HepG2 (cell line): ENCODE measurements at regions of chr18 and their contacts with region 1.

Region 1: DNA sequence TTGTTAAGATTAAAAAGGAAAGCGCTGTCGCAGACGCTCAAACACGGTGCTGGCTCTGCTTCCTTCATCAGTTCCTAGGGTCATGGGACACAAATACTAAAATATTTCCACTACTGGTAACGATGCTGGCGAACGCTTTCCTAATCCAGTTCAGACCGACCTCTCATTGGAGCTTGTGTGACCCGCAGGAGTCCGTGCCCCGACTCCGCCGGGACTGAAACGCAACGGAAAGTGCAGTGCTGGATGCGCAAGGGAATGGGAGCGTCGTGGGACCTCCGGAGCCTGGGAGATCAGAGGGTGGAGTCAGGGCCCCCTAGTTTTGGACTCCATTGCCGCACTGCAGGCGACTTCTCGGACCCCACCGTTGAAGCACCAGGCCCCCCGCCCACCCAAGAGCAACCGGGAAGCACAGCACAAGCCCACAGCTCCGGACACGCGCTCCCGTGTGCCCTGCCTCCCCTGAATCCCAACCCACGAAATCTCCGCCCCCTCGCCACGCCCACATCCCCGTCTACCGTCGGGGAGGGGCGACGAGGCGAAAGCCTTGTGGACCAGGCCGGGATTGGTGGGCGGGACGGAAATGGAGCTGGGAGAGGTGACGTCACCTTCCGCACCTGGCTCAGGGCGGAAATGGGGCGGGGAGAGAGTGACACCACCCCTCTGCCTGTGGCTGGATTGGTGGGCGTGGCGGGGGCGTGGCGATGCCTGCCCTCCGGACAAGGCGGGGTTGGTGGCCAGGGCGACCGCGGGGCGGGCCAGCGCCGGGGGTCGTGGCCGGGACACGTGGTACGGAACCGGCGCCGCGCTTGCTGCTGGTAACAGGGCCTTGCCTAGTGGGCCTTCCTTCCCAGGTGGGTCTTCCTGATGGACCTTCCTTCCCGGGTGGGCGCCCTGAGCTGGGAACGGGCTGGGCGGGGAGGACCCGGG is at the start of gene CNDP2:
- DNase-seq: peak; percentile 96
- ATAC-seq: peak; percentile 87
- H3K4me3 ChIP-seq: peak within 1 kb of the TSS; percentile 89 to 90 (median 89)
- H3K27ac ChIP-seq: peak within 1 kb of the TSS; percentile 87
- H3K4me1 ChIP-seq: peaks cover 41% of the 10 kb centered on the region
- H3K27me3 ChIP-seq: no peaks in the 10 kb centered on the region; a peak in 1 of 5 replicates
- CTCF ChIP-seq: 0 out of 2 replicates have a peak, but pooled peaks have one; percentile 1
- EP300 ChIP-seq: no peak; a peak in 1 of 4 replicates
- POLR2A ChIP-seq: peak; percentile 68 to 93
- RAD21 ChIP-seq: peak; percentile 50
- total RNA-seq, gene CNDP2: 80.8 and 113 TPM in 2 replicates

Region 2: GRCh38 chr18:74013955-74014354 is 481.9 kb before region 1 on chr18:
- CTCF ChIA-PET with region 1: no interaction called
- POLR2A ChIA-PET with region 1: no interaction called
- in situ Hi-C with region 1: no loop called
- intact Hi-C with region 1: no loop called
- DNase-seq: no peak
- ATAC-seq: no peak
- H3K4me3 ChIP-seq: no peak overlapping the region
- H3K27ac ChIP-seq: no peak overlapping the region
- H3K4me1 ChIP-seq: no peaks in the 10 kb centered on the region
- H3K27me3 ChIP-seq: peaks cover 1 to 6% of the 10 kb centered on the region in 2 experiments; a peak in 3 of 5 replicates
- CTCF ChIP-seq: no peak
- EP300 ChIP-seq: no peak
- POLR2A ChIP-seq: no peak
- RAD21 ChIP-seq: no peak

Region 3: GRCh38 chr18:74196220-74197119 is 299.4 kb before region 1 on chr18:
- CTCF ChIA-PET with region 1: interaction called, 3 read pairs
- POLR2A ChIA-PET with region 1: no interaction called
- in situ Hi-C with region 1: loop called (anchors 25 kb)
- intact Hi-C with region 1: loop called (anchors 2 kb)
- DNase-seq: peak; percentile 76
- ATAC-seq: peak; percentile 72
- H3K4me3 ChIP-seq: peak overlapping the region; percentile 9 to 53 (median 25); a peak in 3 of 6 replicates
- H3K27ac ChIP-seq: no peak overlapping the region
- H3K4me1 ChIP-seq: peaks cover 49% of the 10 kb centered on the region
- H3K27me3 ChIP-seq: peaks cover 0 to 2% of the 10 kb centered on the region in 2 experiments; a peak in 2 of 5 replicates
- CTCF ChIP-seq: peak; percentile 84
- EP300 ChIP-seq: no peak
- POLR2A ChIP-seq: no peak
- RAD21 ChIP-seq: peak; percentile 84

Region 4: DNA sequence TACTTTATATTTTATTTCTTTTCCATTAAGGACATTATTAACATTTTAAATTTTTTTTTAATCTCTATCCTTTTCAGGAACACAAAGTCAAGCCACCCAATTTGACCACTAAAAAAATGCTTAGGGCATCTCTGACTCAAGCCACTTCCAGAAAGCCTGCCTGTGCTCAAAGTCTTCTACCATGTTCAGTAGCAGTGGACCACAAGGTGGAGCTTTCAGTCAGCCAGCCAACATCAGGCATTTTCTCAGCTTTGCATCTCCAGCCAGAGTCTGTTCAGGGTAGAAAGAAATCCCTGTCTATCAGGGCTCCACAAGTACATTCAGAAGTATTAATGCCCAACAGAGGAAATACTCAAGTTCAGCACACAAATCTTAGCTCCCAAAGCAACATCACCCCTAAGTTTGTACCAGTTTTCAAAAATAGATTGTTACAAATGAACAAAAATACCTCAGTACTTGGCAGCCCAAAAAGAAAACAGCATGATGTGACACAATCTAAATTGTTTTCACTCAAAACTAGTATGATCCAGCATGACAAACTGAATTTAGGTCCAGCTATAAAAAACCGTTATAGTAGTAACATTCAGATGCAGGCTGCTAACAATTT is 142.6 kb before region 1 on chr18:
- CTCF ChIA-PET with region 1: interaction called, 41 read pairs
- POLR2A ChIA-PET with region 1: no interaction called
- in situ Hi-C with region 1: no loop called
- intact Hi-C with region 1: loop called (anchors 1 kb)
- DNase-seq: peak; percentile 63
- ATAC-seq: peak; percentile 93
- H3K4me3 ChIP-seq: no peak overlapping the region
- H3K27ac ChIP-seq: no peak overlapping the region
- H3K4me1 ChIP-seq: peaks cover 19% of the 10 kb centered on the region
- H3K27me3 ChIP-seq: no peaks in the 10 kb centered on the region; a peak in 1 of 5 replicates
- CTCF ChIP-seq: peak; percentile 88
- EP300 ChIP-seq: no peak
- POLR2A ChIP-seq: no peak
- RAD21 ChIP-seq: peak; percentile 74

Region 5: GRCh38 chr18:74541703-74542555 is 46.1 kb after region 1 on chr18:
- CTCF ChIA-PET with region 1: no interaction called
- POLR2A ChIA-PET with region 1: interaction called, 59 read pairs
- in situ Hi-C with region 1: loop called (anchors 5 kb)
- intact Hi-C with region 1: loop called (anchors 1 kb)
- DNase-seq: peak; percentile 92
- ATAC-seq: peak; percentile 97
- H3K4me3 ChIP-seq: peak overlapping the region; percentile 5 to 57 (median 12); a peak in 4 of 6 replicates
- H3K27ac ChIP-seq: peak overlapping the region; percentile 96
- H3K4me1 ChIP-seq: peaks cover 53% of the 10 kb centered on the region
- H3K27me3 ChIP-seq: no peaks in the 10 kb centered on the region
- CTCF ChIP-seq: no peak
- EP300 ChIP-seq: peak; percentile 70 to 86; a peak in 2 of 4 replicates
- POLR2A ChIP-seq: peak; percentile 79 to 88
- RAD21 ChIP-seq: peak; percentile 39; the same call in 1 of the 2 replicates

Region 6: DNA sequence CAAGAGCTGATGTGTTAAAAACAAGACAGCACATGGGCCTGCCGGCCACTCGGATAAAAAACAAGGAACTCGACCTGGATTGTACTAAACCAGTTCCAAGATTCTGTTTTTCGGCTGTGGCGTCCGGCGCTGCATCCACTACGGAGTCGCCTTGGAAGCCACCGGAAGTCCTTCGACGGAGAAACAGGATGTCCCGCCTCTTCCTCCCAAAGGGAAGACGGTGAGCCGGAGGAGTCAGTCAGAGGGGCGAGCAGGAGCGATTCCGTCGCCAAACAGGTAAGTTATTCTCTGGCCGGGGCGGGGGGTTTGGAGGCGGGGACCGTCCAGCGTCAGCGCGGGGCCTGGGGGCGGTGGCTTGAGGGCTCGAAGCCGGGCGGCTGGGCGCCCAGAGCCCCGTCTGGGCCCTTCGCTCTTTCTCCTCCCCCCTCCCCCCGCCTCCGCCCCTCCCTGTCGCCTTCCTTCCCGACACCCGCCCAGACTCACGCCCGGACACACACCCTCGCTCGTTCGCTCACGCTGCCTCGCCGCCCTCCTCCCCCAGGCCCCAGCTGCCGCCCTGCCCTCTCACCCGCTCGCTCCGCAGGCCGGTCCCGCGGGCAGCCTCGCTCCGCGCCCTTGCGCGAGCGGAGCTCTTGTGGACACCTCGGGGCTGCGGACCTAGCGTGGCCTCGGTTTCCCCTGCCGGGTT is 102.0 kb after region 1 on chr18 and contains the start of gene ZNF407:
- CTCF ChIA-PET with region 1: no interaction called
- POLR2A ChIA-PET with region 1: interaction called, 3 read pairs
- in situ Hi-C with region 1: no loop called
- intact Hi-C with region 1: loop called (anchors 5 kb)
- DNase-seq: peak; percentile 90
- ATAC-seq: peak; percentile 88
- H3K4me3 ChIP-seq: peak within 1 kb of the TSS; percentile 81 to 91 (median 90)
- H3K27ac ChIP-seq: peak within 1 kb of the TSS; percentile 85
- H3K4me1 ChIP-seq: peaks cover 26% of the 10 kb centered on the region
- H3K27me3 ChIP-seq: no peaks in the 10 kb centered on the region; a peak in 1 of 5 replicates
- CTCF ChIP-seq: no peak
- EP300 ChIP-seq: no peak
- POLR2A ChIP-seq: peak; percentile 48 to 74; a peak in 3 of 4 replicates
- RAD21 ChIP-seq: 0 out of 2 replicates have a peak, but pooled peaks have one; percentile 2
- total RNA-seq, gene ZNF407: 8.3 and 8.7 TPM in 2 replicates